ENCODE measurements at regions of chr20 and their contacts with region 1.

Region 1: DNA sequence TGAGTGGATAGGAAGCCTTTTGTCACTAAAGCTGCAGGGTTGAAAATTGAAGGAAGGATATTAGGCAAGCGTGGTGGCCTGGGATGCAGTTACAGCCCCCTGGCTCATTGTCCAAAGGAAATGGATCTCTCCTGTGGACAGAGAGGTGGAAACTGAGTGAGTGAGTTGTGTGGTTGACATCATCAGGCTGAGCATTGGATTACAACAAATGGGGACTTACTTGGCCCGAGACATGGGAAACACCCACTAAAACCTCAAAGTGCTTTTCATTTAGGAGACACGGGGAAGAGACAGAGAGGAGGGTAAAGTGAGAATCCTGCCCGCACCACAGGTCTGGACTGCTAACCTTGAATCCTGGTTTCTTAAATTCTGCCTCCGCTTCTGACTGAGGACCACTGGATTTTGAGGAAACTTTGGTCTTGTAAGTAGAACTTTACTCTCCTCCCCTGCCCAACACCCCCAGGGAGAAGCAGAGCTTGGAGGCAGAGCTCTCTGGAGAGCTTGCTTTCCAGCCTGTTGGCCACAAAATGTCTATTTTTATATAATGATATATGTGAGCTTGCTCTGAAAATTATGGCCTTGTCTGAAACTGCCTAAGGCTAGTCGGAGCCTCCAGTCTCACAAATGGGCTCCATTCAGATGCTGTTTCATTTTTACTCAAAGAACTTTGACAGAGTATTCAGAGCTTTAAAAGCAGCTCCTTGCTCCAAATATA is at the start of gene PKIG:
- DNase-seq: peak; percentile 65 to 78
- ATAC-seq: peak; percentile 86 to 90 (median 88)
- H3K4me3 ChIP-seq: peak within 1 kb of the TSS; percentile 88
- H3K27ac ChIP-seq: peak within 1 kb of the TSS; percentile 96
- H3K4me1 ChIP-seq: peaks cover 62% of the 10 kb centered on the region
- H3K27me3 ChIP-seq: no peaks in the 10 kb centered on the region
- CTCF ChIP-seq: no peak
- total RNA-seq, gene PKIG: 35.2 to 110 (median 88.3) TPM

Region 2: DNA sequence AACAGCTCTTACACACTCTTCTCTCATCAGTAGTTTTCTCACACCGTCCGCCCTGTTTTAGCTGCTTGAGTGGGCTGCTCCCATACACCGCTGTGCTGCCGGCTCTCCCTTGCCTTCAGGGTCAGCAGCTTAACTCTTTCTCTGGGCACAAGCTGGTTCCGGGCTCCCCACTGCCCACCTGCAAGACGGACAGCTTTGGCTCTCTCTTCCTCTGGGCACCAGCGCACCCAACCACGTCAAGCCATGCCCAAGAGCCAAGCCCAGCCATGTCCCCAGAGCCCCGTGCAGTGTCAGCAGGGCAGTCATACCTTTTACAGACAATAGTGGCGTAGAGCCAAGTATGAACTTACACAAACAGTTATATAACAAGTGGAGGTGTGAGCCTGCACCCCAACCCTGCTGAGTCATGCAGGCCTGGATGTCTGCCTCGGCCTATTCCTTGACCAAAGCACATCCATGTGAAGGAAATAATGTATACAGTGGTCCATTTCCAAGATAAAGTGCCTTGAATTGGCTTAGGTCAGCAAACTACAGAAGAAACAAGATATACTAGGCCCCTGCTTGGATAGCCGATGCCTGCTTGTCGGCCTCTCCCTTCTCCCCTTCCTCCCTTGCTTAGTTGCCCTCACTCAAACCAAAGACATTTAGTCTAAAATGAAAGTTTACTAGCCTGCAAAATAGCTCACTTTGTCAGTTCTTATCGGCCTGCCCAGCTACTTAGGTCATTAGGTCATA is 484.8 kb before region 1 on chr20:
- intact Hi-C with region 1: no loop called
- DNase-seq: no peak
- ATAC-seq: peak in 2 of 4 donors; percentile 21 to 41
- H3K4me3 ChIP-seq: no peak overlapping the region
- H3K27ac ChIP-seq: no peak overlapping the region
- H3K4me1 ChIP-seq: peaks cover 7% of the 10 kb centered on the region
- H3K27me3 ChIP-seq: no peaks in the 10 kb centered on the region
- CTCF ChIP-seq: no peak

Region 3: DNA sequence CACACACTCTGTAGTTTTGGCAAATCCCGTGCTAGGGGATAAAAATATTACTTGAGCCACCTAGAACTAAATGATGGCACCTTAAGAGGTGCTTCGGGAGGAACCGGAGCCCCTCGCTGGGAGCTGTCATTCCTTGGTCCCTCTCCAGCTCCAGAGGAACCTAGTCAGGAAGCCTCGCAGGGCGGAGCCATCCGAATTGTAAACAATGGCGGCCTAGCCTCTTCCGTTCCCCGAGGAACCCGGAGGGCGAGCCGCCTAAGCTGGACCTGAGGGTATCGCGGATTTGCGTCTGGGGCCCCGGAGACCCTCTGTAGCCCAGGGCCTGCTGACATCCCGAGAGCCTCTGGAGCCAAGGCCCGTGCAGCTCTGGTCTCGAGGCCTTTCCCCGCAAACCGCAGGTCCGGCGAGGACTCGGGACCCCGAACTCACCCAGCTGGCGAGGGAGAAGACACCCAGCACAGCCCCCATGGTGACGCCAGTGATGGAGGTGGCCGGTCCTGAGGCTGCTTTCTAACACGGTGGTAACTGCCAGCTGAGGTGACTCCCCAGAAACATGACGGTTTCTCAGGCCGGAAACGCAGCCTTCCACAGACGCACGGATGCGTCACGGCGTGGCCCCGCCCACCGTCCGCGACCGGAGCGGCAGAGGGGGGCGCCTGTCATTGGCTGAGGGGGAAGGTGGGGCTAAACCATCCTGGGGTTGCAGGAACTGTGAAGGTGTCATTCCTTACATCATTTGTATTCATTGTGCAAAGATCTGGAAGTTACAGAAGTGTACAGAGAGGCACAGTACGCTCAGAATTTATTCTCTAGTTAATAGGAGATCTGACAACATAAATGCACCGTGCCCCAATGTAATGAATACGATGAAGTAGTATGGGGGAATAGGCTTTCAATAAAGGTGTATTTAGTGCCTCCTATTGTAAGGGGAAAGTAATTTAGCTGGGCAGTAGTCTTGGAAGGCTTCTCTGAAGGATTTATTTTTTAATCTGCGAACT is 60.7 kb before region 1 on chr20 and contains the start of gene SERINC3:
- intact Hi-C with region 1: loop called in 1 of 2 experiments (anchors 5 kb)
- DNase-seq: peak; percentile 97 to 98
- ATAC-seq: peak; percentile 99
- H3K4me3 ChIP-seq: peak within 1 kb of the TSS; percentile 99
- H3K27ac ChIP-seq: peak within 1 kb of the TSS; percentile 100
- H3K4me1 ChIP-seq: peaks cover 42% of the 10 kb centered on the region
- H3K27me3 ChIP-seq: no peaks in the 10 kb centered on the region
- CTCF ChIP-seq: peak; percentile 6
- total RNA-seq, gene SERINC3: 89.5 to 104 (median 97.8) TPM

Region 4: DNA sequence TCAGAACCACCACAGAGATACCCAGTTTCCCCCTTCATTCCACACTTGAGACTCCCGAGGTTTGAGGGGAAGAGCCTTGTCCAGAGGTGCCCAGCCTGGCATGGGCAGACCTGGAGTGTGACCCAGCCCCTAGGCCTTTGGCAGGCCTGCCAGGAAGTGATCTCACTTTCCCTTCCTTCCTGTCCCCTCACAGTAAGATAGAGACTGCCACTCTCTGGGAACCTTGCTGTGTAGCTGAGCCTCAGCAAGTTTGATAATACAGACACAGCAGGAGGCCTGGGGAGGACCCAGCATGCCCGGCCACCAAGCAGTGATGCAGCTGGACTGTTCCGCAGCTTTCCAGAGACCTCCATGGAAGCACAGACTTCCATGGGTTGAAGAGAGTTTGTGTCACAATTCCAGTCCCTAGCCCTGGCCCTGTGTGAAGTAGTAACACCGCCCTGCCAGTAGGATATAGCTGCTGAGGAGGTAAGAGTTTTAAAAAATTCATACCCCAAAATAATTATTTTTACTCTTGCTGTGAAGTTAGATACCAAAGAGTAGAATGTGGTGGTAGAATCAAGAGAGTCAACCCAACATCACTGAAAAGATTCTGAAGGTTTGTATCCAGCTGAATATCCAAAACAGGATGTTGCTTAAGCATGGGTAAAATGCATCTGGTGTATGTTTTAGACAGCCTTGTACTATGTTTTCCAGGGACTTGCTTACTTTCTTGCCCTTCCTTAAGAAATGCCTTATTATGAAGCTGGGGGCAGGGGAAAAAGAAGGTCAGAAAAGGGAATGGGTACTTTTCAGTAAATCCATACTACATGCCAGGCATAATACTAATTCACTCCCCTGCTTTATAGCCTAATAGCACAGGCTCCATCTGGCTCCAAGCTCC is 16.2 kb after region 1 on chr20:
- intact Hi-C with region 1: loop called in 1 of 2 experiments (anchors 2 kb)
- DNase-seq: peak; percentile 44 to 69
- ATAC-seq: peak in 3 of 4 donors; percentile 34 to 48 (median 39)
- H3K4me3 ChIP-seq: peak overlapping the region; percentile 33
- H3K27ac ChIP-seq: peak overlapping the region; percentile 82
- H3K4me1 ChIP-seq: peaks cover 96% of the 10 kb centered on the region
- H3K27me3 ChIP-seq: no peaks in the 10 kb centered on the region
- CTCF ChIP-seq: no peak